Heart right ventricle (tissue), 16 donors: ENCODE measurements at regions of chr9 and their contacts with region 1.

Region 1: DNA sequence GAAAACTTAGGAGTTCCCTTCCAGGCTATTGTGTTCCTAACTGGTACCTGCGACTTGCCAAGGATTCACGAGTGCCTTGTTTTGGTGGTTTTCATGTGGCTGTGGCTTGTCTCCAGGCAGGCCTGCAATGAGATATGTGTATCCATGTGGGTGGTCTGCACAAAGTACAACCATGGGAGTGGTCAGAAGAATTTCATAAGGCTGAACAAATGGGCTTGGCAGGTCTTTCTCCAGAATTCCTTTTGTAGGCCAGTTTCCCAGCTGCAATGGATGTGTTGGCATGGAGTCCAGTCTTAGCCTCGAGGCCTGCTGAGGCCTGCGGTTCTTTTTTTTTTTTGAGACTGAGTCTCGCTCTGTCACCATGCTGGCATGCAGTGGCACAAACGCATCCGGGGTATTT is 28.8 kb upstream of the MELK start:
- DNase-seq: no peak
- ATAC-seq: peak in 3 of 8 donors; percentile 35 to 65 (median 58)
- H3K4me3 ChIP-seq: no peak overlapping the region
- H3K27ac ChIP-seq: no peak overlapping the region
- H3K4me1 ChIP-seq: no peaks in the 10 kb centered on the region
- H3K27me3 ChIP-seq: peaks cover 0 to 7% (median 0%) of the 10 kb centered on the region in 7 donors
- CTCF ChIP-seq: no peak

Region 2: GRCh38 chr9:36441966-36442365 is 102.0 kb before region 1 on chr9:
- intact Hi-C with region 1: loop called in 1 of 10 experiments (anchors 10 kb)
- DNase-seq: no peak
- ATAC-seq: no peak
- H3K4me3 ChIP-seq: no peak overlapping the region
- H3K27ac ChIP-seq: no peak overlapping the region
- H3K4me1 ChIP-seq: peaks cover 0 to 45% (median 19%) of the 10 kb centered on the region in 9 donors
- H3K27me3 ChIP-seq: no peaks in the 10 kb centered on the region
- CTCF ChIP-seq: no peak

Region 3: GRCh38 chr9:36450110-36450732 is 93.7 kb before region 1 on chr9:
- intact Hi-C with region 1: loop called in 2 of 10 experiments (anchors 10 kb)
- DNase-seq: peak in 1 of 2 donors; percentile 18
- ATAC-seq: peak in 3 of 8 donors; percentile 43 to 51 (median 45)
- H3K4me3 ChIP-seq: no peak overlapping the region
- H3K27ac ChIP-seq: no peak overlapping the region
- H3K4me1 ChIP-seq: peaks cover 0 to 37% (median 9%) of the 10 kb centered on the region in 9 donors
- H3K27me3 ChIP-seq: no peaks in the 10 kb centered on the region
- CTCF ChIP-seq: peak; percentile 50 to 80 (median 71)

Region 4: DNA sequence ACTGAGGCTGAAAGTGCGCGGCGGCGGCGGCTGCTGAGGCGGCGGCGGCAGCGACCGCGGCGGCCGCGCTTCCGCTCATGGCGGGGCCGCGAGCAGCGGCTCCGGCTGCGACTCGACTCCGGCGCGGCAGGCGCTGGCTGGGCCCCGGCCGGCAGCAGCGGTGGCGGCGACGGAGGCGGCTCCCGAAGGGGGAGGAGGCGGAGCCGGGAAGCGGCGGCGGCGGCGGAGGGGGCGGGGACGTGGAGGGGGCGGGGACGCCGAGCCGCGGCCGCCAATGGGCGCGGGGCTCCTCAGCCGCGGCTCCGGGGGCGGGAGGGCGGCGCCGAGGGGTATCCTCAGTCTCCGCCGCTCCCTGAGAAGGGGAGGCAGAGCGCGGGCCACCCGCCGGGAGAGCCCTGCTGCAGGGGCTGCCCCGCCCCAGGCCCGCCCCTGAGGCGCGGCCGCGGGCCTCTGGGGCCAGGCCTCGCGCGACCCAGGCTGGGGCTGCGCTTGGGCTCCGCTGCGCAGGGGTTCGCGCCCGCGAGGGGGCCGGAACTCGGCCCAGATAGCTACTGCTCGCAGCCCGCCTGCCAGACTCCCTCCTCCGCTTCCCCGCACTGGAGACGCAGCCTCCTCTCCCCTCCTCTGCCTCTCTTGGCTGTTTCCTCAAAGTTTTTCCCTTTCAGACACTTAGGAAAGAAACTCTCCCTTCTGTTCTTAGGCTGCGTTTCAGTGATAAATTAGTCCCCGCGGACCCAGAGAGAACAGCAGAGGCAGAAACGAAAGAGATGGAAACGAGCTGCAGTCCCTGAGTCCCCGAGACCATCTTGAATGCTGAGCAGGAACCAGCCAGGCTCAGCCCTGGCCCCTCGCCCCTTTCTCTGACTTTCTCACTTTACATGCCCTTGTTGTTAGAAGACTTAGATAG is 56.2 kb before region 1 on chr9:
- intact Hi-C with region 1: no loop called
- DNase-seq: peak; percentile 91 to 92
- ATAC-seq: peak; percentile 97 to 99 (median 98)
- H3K4me3 ChIP-seq: peak overlapping the region; percentile 40 to 98 (median 78)
- H3K27ac ChIP-seq: peak overlapping the region; percentile 85 to 97 (median 94)
- H3K4me1 ChIP-seq: peaks cover 0 to 37% (median 26%) of the 10 kb centered on the region in 9 donors
- H3K27me3 ChIP-seq: no peaks in the 10 kb centered on the region
- CTCF ChIP-seq: peak in 3 of 9 donors; percentile 7 to 35 (median 15)

Region 5: GRCh38 chr9:36721846-36722572 is 178.1 kb after region 1 on chr9:
- intact Hi-C with region 1: no loop called
- DNase-seq: no peak
- ATAC-seq: no peak
- H3K4me3 ChIP-seq: no peak overlapping the region
- H3K27ac ChIP-seq: no peak overlapping the region
- H3K4me1 ChIP-seq: no peaks in the 10 kb centered on the region
- H3K27me3 ChIP-seq: peaks cover 0 to 33% (median 7%) of the 10 kb centered on the region in 7 donors
- CTCF ChIP-seq: no peak

Region 6: DNA sequence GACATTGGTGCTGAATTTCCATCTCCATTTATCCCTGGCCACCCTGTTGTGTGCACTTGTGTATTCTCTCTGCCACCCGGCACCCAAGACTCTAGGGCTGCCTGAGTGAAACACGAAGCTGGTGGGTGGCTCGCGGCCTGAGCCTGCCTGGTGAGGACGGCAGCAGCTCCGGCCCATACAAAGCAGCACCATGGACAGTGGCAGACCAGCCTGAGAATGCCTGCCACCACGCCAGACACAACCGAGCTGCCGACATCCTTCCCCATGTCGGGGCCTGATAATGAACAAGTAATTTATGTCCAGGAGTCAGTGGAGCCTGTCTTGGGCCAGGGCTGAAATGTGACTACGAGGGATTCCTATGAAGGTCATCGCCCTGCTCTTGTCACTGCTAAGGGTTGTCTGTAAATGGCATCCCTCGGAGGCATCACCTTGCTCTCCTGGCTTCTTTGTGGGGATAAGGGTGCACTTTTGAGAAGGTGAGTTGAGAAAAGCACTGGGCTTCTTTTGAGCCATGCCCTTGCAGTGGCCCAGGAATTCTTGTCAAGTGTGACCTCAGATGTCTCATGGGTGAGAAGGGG is 204.5 kb after region 1 on chr9:
- intact Hi-C with region 1: no loop called
- DNase-seq: peak; percentile 22 to 29
- ATAC-seq: peak in 4 of 8 donors; percentile 42 to 64 (median 50)
- H3K4me3 ChIP-seq: no peak overlapping the region
- H3K27ac ChIP-seq: no peak overlapping the region
- H3K4me1 ChIP-seq: no peaks in the 10 kb centered on the region
- H3K27me3 ChIP-seq: peaks cover 0 to 71% (median 48%) of the 10 kb centered on the region in 7 donors
- CTCF ChIP-seq: no peak